Heart right ventricle (tissue), 16 donors: ENCODE measurements at regions of chr20 and their contacts with region 1.

Region 1: DNA sequence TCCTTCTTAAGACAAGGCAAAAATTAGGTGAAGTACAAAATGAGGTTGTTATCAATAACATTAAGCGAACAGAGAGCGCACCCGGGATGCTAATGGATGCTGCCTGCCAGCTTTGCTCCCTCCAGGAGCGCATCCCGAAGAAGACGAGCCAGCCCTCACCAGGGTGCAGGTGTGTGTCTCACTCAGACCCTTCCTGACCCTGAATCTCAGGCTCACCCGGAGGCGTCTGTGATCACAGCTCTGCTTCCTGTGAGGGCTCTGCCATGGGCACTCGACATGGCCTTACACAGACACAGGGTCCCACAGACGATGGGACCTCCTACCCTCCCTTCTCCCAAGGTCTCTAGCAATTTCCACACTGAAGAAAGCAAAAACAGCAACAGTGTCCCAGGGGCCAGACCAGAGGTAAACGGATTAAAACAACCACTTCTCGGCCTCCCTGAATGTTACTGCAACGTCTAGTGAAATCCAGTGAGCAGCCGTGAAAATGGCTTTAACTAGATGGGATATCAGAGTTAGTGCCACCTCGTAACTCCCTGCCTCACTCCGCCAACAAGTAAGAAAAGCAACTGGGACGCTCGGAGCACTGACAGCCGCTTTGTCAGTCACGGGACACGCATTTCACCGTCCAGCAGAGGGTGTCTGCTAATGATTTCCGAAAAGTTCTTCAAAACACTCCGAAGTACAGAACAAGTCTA is 11.7 kb downstream of the ZBTB46 start:
- DNase-seq: no peak
- ATAC-seq: peak in 5 of 8 donors; percentile 20 to 60 (median 45)
- H3K4me3 ChIP-seq: peak overlapping the region in 1 of 10 donors; percentile 13
- H3K27ac ChIP-seq: peak overlapping the region in 6 of 10 donors; percentile 6 to 53 (median 18)
- H3K4me1 ChIP-seq: peaks cover 5 to 69% (median 25%) of the 10 kb centered on the region in 9 donors
- H3K27me3 ChIP-seq: no peaks in the 10 kb centered on the region
- CTCF ChIP-seq: peak; percentile 5 to 58 (median 41)

Region 2: DNA sequence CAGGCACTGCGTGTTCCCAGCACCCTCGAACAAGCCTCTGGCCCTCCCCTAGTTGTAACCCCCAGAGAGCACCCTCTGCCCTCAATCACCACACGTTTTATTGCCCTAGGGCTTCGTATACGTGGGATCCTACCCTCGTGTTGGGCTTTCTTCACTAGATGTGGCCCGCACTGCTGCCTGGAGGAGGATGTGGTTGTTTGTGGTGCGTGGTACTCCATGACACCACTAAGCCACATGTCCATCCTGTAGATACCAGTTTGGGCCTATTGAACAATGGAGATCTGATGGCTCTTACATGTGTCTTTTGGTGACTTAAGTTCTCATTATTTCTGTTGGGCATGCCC is 62.8 kb before region 1 on chr20:
- intact Hi-C with region 1: no loop called
- DNase-seq: no peak
- ATAC-seq: no peak
- H3K4me3 ChIP-seq: no peak overlapping the region
- H3K27ac ChIP-seq: peak overlapping the region in 1 of 10 donors; percentile 8
- H3K4me1 ChIP-seq: peaks cover 0 to 6% (median 0%) of the 10 kb centered on the region in 9 donors
- H3K27me3 ChIP-seq: no peaks in the 10 kb centered on the region
- CTCF ChIP-seq: no peak

Region 3: DNA sequence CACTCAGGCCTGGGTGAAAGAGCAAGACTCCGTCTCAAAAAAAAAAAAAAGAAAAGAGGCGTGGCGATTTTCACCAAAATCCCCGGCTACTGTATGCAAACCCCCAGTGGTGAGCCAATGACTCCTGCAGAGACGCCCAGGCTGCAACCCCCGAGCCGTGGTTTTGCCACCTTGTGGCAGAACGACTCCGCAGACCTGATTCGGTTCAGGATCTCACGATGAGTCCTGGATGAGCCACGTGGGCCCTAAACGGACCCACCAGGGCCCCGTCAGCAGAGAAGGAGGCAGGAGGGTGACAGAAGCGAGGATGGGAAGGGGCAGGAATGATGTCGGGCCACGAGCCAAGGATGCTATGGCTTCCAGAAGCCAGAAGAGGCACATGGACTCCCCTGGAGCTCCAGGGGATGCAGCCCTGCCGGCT is 37.3 kb before region 1 on chr20:
- intact Hi-C with region 1: loop called in 2 of 10 experiments (anchors 5 kb)
- DNase-seq: no peak
- ATAC-seq: no peak
- H3K4me3 ChIP-seq: no peak overlapping the region
- H3K27ac ChIP-seq: no peak overlapping the region
- H3K4me1 ChIP-seq: peaks cover 3 to 24% (median 15%) of the 10 kb centered on the region in 9 donors
- H3K27me3 ChIP-seq: no peaks in the 10 kb centered on the region
- CTCF ChIP-seq: no peak

Region 4: DNA sequence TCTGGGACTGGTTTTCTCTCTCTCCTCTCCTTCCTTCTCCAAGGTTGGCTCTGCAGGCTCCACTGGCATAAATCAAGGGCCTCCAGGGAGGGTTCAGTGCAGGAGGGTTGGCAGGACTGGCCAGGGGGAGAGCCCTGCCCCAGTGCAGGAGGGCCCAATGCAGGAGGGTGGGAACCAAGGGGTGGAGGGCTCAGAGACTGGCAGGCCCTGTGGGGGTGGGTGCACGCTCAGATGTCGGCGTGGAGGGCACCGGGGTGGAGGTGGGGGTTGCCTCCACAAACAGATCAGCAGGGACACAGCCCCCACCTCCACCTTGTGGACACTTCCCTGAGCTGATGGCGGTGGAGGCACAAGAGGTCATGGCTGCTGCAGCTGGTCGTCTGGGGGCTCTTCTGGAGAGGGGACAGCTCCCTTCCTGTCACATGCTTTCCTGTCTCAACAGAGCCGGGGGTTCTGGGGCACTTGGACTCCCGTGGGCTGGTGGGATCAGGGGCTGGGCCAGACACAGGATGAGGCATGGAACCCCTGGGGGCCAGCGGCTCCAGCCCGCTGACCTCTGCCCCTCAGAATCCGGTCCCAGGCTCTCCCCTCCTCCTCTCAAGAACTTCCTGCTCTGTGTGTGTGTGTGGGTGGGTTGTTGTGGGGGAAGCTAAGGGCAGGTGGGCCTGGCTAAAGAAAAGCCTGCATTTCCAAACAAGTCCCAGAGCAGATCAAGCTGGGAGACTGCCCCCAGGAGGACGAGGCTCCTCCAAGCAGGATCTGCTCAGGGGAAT is 39.2 kb after region 1 on chr20:
- intact Hi-C with region 1: loop called in 3 of 10 experiments (anchors 5 to 10 kb)
- DNase-seq: peak; percentile 73 to 85
- ATAC-seq: peak; percentile 36 to 78 (median 62)
- H3K4me3 ChIP-seq: peak overlapping the region in 2 of 10 donors; percentile 14 to 28
- H3K27ac ChIP-seq: peak overlapping the region; percentile 48 to 97 (median 82)
- H3K4me1 ChIP-seq: peaks cover 38 to 78% (median 70%) of the 10 kb centered on the region in 9 donors
- H3K27me3 ChIP-seq: peaks cover 0 to 12% (median 0%) of the 10 kb centered on the region in 7 donors
- CTCF ChIP-seq: peak in 7 of 9 donors; percentile 26 to 64 (median 51)